Activated CD4-positive, alpha-beta memory T cell treated with anti-CD3 and anti-CD28 coated beads for 36 hours (primary cell): ENCODE measurements at regions of chr3 and their contacts with region 1.

Region 1: DNA sequence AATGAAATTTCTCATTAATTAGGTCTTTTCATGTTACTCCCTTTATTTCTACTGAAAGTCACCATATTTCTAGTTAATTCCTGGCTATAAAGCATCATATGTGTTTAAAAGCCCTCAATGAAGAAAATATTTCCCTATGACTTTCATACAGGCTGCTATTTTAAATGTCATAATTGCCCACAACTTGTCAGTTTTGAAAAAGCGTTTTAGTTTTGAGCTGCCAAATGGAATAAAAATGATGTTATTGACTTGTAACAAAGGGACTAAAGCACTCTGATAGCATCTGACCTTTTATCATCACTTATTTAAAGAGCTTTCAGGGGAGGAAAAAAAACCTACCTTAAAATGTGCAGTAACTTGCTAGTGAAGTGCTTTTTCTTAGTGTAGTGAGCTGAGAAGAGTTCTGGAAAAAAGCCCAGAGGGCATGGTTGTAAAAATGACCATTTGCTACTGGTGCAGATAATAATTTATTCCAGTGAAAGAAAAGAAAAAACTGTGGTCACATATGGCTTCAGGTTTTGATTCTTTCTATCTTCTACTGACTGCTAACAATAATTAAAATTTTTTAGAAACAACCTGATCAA is 877.2 kb downstream of the CADM2 start:
- DNase-seq: no peak
- H3K4me3 Mint-ChIP-seq: no peak overlapping the region
- H3K27ac Mint-ChIP-seq: no peak overlapping the region
- H3K4me1 Mint-ChIP-seq: no peaks in the 10 kb centered on the region
- H3K27me3 Mint-ChIP-seq: no peaks in the 10 kb centered on the region

Region 2: DNA sequence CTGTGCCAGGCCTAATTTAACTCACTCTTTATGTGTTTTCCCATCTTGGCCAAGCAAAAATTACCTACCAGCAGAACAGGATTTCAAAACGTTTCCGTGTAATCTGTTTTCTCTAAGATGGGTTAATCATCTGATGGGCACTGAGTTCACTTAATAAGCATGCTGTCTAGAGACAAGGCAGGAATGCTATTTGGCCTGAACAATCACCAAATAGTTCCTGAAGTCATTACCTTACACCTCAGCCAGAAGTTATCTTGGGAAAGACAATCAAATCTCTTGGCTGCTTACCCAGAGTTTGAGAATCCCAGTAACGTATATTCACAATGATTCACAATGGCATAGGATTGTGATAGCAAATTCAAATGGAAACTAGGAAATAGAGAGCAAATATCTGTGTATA is 98.1 kb before region 1 on chr3:
- CTCF ChIA-PET with region 1: no interaction called
- POLR2A ChIA-PET with region 1: no interaction called
- intact Hi-C with region 1: no loop called
- DNase-seq: no peak
- H3K4me3 Mint-ChIP-seq: no peak overlapping the region
- H3K27ac Mint-ChIP-seq: no peak overlapping the region
- H3K4me1 Mint-ChIP-seq: no peaks in the 10 kb centered on the region
- H3K27me3 Mint-ChIP-seq: no peaks in the 10 kb centered on the region

Region 3: DNA sequence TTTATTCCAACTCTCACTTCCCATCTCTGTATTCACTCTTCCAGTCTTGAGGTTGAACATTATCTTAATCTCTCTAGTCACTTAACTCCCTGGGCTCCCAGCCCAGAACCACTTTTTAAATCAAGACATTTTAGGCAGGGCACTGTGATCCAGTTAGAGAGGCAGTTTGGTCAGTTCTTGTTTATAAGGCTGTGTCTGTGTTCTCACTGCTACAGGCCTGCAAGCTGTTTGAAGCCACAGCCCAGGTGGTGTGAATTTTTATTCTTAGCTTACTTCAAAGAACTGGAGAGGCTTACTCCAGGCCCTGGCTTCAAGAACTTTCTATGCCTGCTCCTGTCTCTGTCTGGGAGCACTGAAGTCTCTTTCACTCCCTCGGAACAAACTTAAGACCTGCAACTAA is 28.9 kb after region 1 on chr3:
- CTCF ChIA-PET with region 1: no interaction called
- POLR2A ChIA-PET with region 1: no interaction called
- intact Hi-C with region 1: loop called (anchors 1 kb)
- DNase-seq: no peak
- H3K4me3 Mint-ChIP-seq: no peak overlapping the region
- H3K27ac Mint-ChIP-seq: no peak overlapping the region
- H3K4me1 Mint-ChIP-seq: no peaks in the 10 kb centered on the region
- H3K27me3 Mint-ChIP-seq: no peaks in the 10 kb centered on the region

Region 4: DNA sequence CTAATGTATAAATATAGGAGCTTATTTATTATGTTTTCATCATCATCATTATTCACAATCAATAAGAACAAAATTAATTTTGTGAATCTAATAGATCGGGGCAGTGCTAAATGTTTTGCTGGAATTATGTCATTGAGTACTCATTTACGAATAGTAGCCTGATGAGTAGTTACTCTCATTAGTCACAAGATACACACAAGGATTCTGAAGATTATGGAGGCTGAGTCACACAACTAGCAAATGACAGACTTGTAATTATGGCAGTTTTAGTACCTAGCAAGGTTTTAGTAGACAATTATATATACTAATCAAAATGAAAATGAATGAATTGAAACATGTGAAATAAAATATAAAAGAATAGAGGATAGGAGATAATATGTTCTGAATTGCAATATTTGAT is 77.0 kb after region 1 on chr3:
- CTCF ChIA-PET with region 1: no interaction called
- POLR2A ChIA-PET with region 1: no interaction called
- intact Hi-C with region 1: no loop called
- DNase-seq: no peak
- H3K4me3 Mint-ChIP-seq: no peak overlapping the region
- H3K27ac Mint-ChIP-seq: no peak overlapping the region
- H3K4me1 Mint-ChIP-seq: no peaks in the 10 kb centered on the region
- H3K27me3 Mint-ChIP-seq: no peaks in the 10 kb centered on the region

Region 5: DNA sequence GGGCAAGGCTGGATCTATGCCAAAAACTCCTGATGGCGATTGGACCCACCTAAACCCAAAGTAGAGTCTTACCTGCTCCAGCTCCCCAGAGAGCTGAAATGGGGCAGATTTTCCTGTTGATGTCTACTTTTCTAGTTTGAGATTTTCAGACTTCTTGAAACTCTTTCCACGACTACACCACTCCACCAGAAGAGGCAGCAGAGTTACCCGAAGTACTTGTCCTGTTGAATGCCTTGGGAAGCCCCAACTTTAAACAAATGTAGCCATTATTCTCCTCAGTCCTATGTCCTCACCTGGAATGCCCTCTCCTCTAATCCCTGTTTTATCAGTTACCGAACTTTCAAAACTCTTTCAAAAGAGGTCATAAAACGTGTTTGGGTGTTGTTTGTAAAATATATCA is 311.2 kb after region 1 on chr3:
- CTCF ChIA-PET with region 1: no interaction called
- POLR2A ChIA-PET with region 1: no interaction called
- intact Hi-C with region 1: no loop called
- DNase-seq: no peak
- H3K4me3 Mint-ChIP-seq: no peak overlapping the region
- H3K27ac Mint-ChIP-seq: no peak overlapping the region
- H3K4me1 Mint-ChIP-seq: no peaks in the 10 kb centered on the region
- H3K27me3 Mint-ChIP-seq: no peaks in the 10 kb centered on the region